Activated CD4-positive, alpha-beta T cell treated with anti-CD3 and anti-CD28 coated beads for 36 hours (primary cell): ENCODE measurements at regions of chr7 and their contacts with region 1.

Region 1: DNA sequence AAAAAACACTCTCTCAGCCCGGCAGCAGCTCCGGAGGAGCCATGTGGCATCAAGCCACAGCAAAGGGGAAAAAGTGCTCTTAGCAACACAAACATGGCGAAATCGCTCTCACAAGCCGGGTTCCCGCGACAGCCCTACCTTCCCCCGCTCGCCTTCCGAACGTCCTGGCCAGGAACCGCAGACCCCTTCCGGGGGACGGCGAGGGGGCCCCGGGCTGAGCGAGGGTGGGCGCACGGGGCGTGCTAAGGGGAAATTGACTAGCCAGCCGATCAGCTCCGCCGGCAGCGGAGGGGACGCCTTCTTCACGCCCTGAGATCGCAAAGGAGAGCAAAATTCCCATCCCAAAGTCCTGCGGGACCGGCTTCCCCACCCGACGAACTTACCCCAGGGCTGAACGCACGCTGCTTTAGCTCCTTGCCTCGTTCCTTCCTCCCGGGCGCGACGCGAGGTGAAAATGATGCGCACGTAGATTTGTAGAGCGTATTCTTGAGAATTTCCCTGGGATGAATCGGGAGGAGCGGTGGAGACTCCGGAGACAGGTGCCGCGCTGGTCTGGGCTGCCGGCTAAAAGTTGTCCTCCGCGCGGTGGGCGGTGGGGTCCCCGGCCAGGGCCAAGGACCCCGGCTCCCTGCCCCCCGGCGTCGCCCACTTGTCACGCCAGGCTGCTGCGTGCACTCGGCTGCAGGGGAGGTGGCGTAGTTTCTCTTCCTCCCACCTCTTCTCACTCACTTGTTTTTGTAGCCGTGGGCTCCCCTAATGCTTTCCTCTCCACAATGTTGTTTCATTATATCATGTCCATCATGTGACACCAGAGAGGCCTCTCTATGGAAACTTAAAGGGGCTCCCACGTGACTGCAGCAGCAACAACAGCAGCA is 220.1 kb upstream of the MKLN1 start:
- DNase-seq: peak; percentile 83
- ATAC-seq: peak; percentile 47
- H3K4me3 Mint-ChIP-seq: peak overlapping the region; percentile 95
- H3K27ac Mint-ChIP-seq: peak overlapping the region; percentile 97
- H3K4me1 Mint-ChIP-seq: peaks cover 66% of the 10 kb centered on the region
- H3K27me3 Mint-ChIP-seq: no peaks in the 10 kb centered on the region

Region 2: GRCh38 chr7:129952653-129953560 is 1154.7 kb before region 1 on chr7 and contains the start of gene UBE2H:
- CTCF ChIA-PET with region 1: no interaction called
- POLR2A ChIA-PET with region 1: interaction called, 3 read pairs
- intact Hi-C with region 1: loop called in 1 of 2 experiments (anchors 10 kb)
- DNase-seq: peak; percentile 96
- ATAC-seq: peak; percentile 66
- H3K4me3 Mint-ChIP-seq: no peak within 1 kb of the TSS
- H3K27ac Mint-ChIP-seq: peak within 1 kb of the TSS; percentile 99
- H3K4me1 Mint-ChIP-seq: peaks cover 8% of the 10 kb centered on the region
- H3K27me3 Mint-ChIP-seq: no peaks in the 10 kb centered on the region
- total RNA-seq, gene UBE2H: 25.6 to 40.7 TPM

Region 3: DNA sequence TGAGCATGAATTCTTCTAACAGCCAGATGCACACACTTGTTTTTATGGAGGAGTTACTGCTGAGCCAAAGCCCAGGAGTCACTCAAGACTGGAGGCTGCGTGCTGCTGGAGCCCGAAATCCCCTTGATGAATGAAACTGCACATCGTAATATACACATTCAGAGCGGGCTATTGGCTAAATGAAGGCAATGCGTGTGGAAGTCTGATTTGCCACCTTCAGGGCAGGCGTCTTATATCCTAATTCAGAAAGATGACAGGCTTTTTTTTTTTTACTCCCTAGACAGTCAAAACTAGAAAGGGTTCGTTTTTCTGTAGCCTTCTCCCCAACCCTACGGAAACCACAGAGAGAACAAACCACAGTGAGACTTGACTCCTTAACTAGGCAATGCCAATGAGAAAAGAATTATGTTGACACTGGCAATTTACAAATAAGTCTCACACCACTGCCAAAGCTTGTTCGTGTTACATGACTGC is 146.4 kb before region 1 on chr7:
- CTCF ChIA-PET with region 1: interaction called, 4 read pairs
- POLR2A ChIA-PET with region 1: interaction called, 6 read pairs
- intact Hi-C with region 1: loop called (anchors 1 to 5 kb)
- DNase-seq: peak; percentile 88
- ATAC-seq: peak; percentile 86
- H3K4me3 Mint-ChIP-seq: no peak overlapping the region
- H3K27ac Mint-ChIP-seq: peak overlapping the region; percentile 100
- H3K4me1 Mint-ChIP-seq: peaks cover 40% of the 10 kb centered on the region
- H3K27me3 Mint-ChIP-seq: no peaks in the 10 kb centered on the region

Region 4: DNA sequence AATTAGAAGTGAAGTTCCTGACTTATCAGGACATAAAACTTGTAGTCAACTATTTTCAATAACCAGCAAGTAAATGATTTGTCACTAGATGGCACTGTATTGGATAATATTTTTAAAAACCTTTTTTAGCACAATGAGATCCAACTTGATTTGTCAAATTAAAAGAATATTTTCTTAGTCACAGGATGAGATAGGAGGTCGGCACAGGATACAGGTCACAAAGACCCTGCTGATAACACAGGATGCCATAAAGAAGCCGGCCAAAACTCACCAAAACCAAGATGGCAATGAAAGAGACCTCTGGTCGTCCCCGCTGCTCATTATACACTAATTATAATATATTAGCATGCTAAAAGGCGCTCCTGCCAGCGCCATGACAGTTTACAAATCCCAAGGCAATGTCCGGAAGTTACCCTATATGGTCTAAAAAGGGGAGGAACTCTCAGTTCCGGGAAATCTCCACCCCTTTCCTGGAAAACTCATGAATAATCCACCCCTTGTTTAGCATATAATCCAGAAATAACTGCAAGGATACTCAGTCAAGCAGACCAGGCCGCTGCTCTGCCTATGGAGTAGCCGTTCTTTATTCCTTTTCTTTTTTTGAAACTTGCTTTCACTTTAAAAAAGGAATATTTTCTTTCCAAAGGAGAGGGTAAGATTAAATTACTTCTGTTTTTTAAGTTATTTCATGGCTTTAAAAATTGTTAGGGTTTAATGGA is 35.6 kb before region 1 on chr7:
- CTCF ChIA-PET with region 1: interaction called, 12 read pairs
- POLR2A ChIA-PET with region 1: interaction called, 9 read pairs
- intact Hi-C with region 1: loop called (anchors 2 kb)
- DNase-seq: peak; percentile 22
- ATAC-seq: no peak
- H3K4me3 Mint-ChIP-seq: no peak overlapping the region
- H3K27ac Mint-ChIP-seq: peak overlapping the region; percentile 70
- H3K4me1 Mint-ChIP-seq: peaks cover 78% of the 10 kb centered on the region
- H3K27me3 Mint-ChIP-seq: no peaks in the 10 kb centered on the region

Region 5: DNA sequence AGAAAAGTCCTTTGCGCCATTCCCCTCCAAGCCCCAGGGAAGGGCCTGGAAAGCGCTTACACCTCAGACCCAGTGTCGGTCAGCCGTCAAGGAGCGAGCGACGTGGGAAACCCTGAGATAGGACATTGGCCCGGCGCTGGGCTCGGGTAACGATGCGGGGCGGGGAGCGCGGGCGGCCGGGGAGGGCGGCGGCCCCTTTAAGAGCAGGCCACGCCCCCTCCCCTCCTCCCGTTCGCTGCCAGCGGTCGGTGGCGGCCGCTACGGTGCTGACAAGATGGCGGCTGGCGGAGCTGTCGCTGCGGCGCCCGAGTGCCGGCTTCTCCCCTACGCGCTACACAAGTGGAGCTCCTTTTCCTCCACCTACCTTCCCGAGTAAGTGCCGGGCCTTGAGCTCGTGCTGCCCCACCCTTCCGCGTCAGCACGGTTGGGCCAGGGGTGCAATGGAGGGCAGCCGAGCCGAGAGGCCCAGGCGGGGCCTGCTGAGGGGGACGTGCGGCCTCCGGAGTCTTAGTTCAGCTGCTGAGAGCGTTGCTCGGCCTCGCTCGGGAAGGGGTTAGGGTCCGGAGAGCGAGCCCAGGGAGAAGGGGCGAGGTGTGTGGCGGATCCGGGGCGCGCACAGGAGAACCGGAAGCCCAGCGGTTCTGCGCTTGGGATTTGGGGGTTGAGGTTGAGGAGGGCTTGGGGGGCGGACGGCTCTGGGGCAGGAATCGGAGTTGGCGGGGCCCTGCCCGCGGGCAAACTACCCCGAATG is 220.2 kb after region 1 on chr7 and contains the start of gene MKLN1:
- CTCF ChIA-PET with region 1: no interaction called
- POLR2A ChIA-PET with region 1: interaction called, 3 read pairs
- intact Hi-C with region 1: loop called (anchors 1 to 2 kb)
- DNase-seq: peak; percentile 95
- ATAC-seq: peak; percentile 94
- H3K4me3 Mint-ChIP-seq: peak within 1 kb of the TSS; percentile 94
- H3K27ac Mint-ChIP-seq: peak within 1 kb of the TSS; percentile 97
- H3K4me1 Mint-ChIP-seq: peaks cover 60% of the 10 kb centered on the region
- H3K27me3 Mint-ChIP-seq: no peaks in the 10 kb centered on the region
- total RNA-seq, gene MKLN1: 40.1 to 42.9 TPM

Region 6: DNA sequence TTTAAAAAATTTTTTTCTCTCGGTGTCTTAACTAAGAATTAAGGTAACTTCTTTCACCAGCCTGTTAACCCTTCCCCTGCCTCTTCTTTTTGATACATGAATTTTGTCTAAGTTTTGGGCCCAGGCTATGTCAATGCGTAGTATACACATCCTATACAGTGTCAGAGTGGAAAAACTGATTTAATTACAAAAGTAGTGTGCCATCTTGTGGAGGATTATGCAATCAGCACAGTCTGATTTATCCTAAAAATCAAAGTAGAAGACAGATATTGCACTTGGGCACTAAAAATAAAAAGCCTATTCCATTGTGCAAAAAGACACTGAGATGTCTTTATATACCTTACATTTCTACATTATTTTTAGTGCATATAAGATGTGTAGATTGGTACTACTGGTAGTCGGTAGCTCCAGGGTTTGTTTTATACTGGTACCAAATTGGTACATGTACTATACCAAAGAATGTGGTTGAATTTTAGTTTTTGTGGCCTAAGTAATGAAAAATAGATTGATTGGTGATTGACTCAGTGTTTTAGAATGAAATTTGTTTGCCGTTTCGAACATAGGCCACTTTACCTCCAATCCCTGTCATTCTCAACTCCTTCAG is 316.7 kb after region 1 on chr7:
- CTCF ChIA-PET with region 1: no interaction called
- POLR2A ChIA-PET with region 1: no interaction called
- intact Hi-C with region 1: loop called in 1 of 2 experiments (anchors 10 kb)
- DNase-seq: no peak
- ATAC-seq: peak; percentile 92
- H3K4me3 Mint-ChIP-seq: no peak overlapping the region
- H3K27ac Mint-ChIP-seq: no peak overlapping the region
- H3K4me1 Mint-ChIP-seq: peaks cover 8% of the 10 kb centered on the region
- H3K27me3 Mint-ChIP-seq: no peaks in the 10 kb centered on the region